ENCODE measurements at regions of chr1 and their contacts with region 1.

Region 1: GRCh38 chr1:160877221-160877620 is 7.8 kb downstream of the ITLN1 start:
- DNase-seq: peak; percentile 53
- H3K4me3 ChIP-seq: no peak overlapping the region
- H3K27ac ChIP-seq: no peak overlapping the region
- H3K4me1 ChIP-seq: no peaks in the 10 kb centered on the region
- CTCF ChIP-seq: peak; percentile 76

Region 2: DNA sequence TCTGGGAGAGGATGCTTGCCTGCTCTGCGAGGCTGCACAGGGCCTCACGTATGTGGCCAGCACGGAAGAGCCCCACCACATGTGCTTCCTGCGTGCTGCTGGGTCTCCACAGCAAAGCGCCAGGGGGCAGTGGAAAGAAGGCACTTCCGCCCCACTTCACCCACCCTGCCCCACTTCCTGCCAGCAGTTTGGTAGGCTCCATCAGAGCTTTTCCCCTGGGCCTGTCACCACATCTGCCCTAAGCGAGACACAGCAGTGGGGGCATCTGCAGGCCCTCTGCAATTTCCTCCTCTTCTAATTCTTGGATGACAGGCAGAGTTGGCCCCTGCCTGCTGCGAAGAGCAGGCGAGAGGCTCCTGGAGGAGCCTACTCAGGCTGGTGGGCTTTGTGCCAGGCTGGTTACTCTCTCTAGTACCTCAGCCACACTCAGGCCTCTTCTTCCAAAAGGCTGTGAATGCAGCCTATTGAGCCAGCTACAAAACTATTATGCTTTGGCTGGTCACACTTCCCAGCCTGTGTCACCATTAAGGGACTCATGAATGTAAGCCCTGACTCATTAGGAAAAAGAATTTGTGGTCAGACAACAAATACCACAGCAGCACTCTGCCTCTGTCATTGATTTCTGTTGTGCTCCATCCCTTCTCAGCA is 39.5 kb before region 1 on chr1:
- CTCF ChIA-PET with region 1: no interaction called
- POLR2A ChIA-PET with region 1: no interaction called
- intact Hi-C with region 1: loop called (anchors 1 kb)
- DNase-seq: peak; percentile 97
- H3K4me3 ChIP-seq: peak overlapping the region; percentile 10
- H3K27ac ChIP-seq: peak overlapping the region; percentile 63
- H3K4me1 ChIP-seq: peaks cover 39% of the 10 kb centered on the region
- CTCF ChIP-seq: peak; percentile 69

Measured in OCI-LY7 (cell line).